ENCODE measurements at regions of chr9 and their contacts with region 1.

Region 1: DNA sequence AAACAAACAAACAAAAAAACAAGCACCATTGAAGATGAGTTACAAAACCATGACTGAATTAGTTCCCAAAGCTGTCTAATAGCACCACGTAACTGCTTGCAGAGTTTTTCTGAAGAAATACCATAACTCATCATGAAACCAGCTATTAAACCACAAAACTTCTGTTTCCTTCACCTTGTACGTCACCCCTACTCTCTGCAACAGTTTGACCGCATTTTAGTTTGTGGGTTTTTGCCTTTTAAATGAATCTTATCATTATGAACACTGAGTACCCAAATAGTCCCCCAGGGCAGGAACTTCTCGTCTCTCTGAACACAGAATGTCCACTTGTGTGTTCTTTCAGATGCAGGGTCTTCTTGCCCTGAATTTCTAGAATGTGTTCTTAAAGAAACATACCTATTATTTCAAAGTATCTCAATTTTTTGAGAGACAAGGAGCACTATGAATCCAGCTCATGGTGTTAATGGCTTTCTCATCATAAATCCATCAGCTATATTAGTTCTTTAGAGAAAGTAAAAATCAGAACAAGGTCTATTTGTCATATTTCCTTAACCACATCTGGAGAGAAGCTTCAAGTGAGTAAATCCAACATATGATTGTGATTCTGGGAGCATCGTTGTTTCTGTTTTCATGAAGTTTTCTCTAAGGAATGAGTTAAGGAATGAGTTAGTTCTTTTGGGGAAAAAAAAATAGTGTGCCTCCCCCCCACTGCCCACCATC is 210.6 kb downstream of the AUH start:
- DNase-seq: peak in 1 of 2 donors; percentile 87
- ATAC-seq: peak; percentile 83 to 93 (median 86)
- H3K4me3 ChIP-seq: no peak overlapping the region
- H3K4me3 Mint-ChIP-seq: peak overlapping the region; percentile 75
- H3K27ac ChIP-seq: peak overlapping the region; percentile 88
- H3K27ac Mint-ChIP-seq: peak overlapping the region; percentile 83 to 93
- H3K4me1 ChIP-seq: peaks cover 72% of the 10 kb centered on the region
- H3K4me1 Mint-ChIP-seq: peaks cover 66 to 69% of the 10 kb centered on the region in 2 donors
- H3K27me3 ChIP-seq: no peaks in the 10 kb centered on the region
- H3K27me3 Mint-ChIP-seq: no peaks in the 10 kb centered on the region
- CTCF ChIP-seq: no peak

Region 2: GRCh38 chr9:91101611-91102168 is 49.5 kb before region 1 on chr9:
- intact Hi-C with region 1: loop called (anchors 1 kb)
- DNase-seq: peak; percentile 41 to 92
- ATAC-seq: peak; percentile 59 to 83 (median 63)
- H3K4me3 ChIP-seq: no peak overlapping the region
- H3K4me3 Mint-ChIP-seq: peak overlapping the region; percentile 57
- H3K27ac ChIP-seq: no peak overlapping the region
- H3K27ac Mint-ChIP-seq: peak overlapping the region; percentile 65 to 85
- H3K4me1 ChIP-seq: peaks cover 38% of the 10 kb centered on the region
- H3K4me1 Mint-ChIP-seq: peaks cover 36 to 37% of the 10 kb centered on the region in 2 donors
- H3K27me3 ChIP-seq: no peaks in the 10 kb centered on the region
- H3K27me3 Mint-ChIP-seq: peaks cover 0 to 5% of the 10 kb centered on the region in 2 donors
- CTCF ChIP-seq: no peak

Region 3: DNA sequence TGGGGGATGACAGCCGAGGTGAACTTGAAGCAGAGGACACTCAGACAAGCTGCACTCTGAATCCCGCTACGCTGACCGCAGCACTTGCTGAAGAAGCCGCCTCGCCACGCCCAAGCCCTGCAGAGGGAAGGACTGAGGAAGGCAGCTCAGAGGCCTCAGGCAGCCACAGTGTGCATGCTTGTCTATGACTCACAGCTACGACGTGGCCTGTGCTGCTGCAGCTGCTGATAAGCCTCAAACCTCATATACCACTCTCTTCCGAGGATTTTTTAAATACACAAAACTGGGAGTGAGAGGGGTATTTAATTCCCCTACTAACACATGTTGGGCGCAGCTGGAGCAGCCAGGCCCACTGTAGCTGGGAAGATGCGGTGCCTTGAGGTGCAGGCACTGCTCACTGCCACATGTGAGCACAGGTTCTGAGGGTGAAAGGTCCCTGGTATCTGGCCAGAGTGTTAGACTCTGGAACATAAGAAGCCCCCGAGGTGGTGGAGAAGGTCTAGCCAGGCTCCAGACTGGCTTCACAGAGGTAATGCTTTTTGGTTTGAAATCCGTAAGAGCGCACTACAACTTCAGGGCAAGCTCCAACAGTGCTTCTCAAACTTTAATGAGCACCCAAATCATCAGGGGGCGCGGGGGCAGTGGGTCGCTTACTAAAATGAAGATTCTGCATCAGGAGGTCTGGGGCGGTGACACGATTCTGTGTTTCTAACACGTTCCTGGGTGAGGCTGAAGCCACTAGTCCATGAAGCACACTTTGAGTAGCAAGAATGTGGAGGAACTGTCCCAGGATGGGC is 13.8 kb after region 1 on chr9:
- intact Hi-C with region 1: loop called (anchors 1 kb)
- DNase-seq: peak; percentile 68 to 75
- ATAC-seq: peak; percentile 77 to 89 (median 78)
- H3K4me3 ChIP-seq: no peak overlapping the region
- H3K4me3 Mint-ChIP-seq: peak overlapping the region; percentile 87
- H3K27ac ChIP-seq: peak overlapping the region; percentile 78
- H3K27ac Mint-ChIP-seq: peak overlapping the region; percentile 93 to 94
- H3K4me1 ChIP-seq: peaks cover 62% of the 10 kb centered on the region
- H3K4me1 Mint-ChIP-seq: peaks cover 44 to 46% of the 10 kb centered on the region in 2 donors
- H3K27me3 ChIP-seq: no peaks in the 10 kb centered on the region
- H3K27me3 Mint-ChIP-seq: no peaks in the 10 kb centered on the region
- CTCF ChIP-seq: no peak

Region 4: DNA sequence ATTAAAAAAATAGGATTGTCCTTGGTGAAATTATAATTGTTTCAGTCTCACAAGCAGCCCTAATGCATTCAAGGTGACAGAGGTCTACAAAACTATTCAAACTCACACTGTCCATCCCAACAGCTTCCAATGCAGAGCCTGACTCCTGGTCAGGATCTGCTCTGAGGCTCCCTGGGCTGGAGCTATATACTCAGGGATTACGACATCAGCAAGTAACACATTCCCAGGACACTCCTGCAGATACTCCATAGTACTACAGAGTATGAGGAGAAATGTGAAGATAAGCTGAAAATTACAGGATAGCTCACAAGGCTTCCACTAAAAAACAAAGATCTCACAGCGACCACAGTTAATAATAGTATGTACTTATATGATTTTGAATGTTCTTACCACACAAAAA is 80.5 kb after region 1 on chr9:
- intact Hi-C with region 1: no loop called
- DNase-seq: no peak
- ATAC-seq: no peak
- H3K4me3 ChIP-seq: no peak overlapping the region
- H3K4me3 Mint-ChIP-seq: no peak overlapping the region
- H3K27ac ChIP-seq: no peak overlapping the region
- H3K27ac Mint-ChIP-seq: no peak overlapping the region
- H3K4me1 ChIP-seq: no peaks in the 10 kb centered on the region
- H3K4me1 Mint-ChIP-seq: peaks cover 0 to 5% of the 10 kb centered on the region in 2 donors
- H3K27me3 ChIP-seq: no peaks in the 10 kb centered on the region
- H3K27me3 Mint-ChIP-seq: no peaks in the 10 kb centered on the region
- CTCF ChIP-seq: no peak

Region 5: GRCh38 chr9:91422758-91423711 is 271.9 kb after region 1 on chr9:
- intact Hi-C with region 1: loop called (anchors 2 kb)
- DNase-seq: peak; percentile 59 to 82
- ATAC-seq: peak; percentile 34 to 57 (median 50)
- H3K4me3 ChIP-seq: peak overlapping the region; percentile 75
- H3K4me3 Mint-ChIP-seq: peak overlapping the region; percentile 97
- H3K27ac ChIP-seq: peak overlapping the region; percentile 58
- H3K27ac Mint-ChIP-seq: peak overlapping the region; percentile 92 to 98
- H3K4me1 ChIP-seq: peaks cover 44% of the 10 kb centered on the region
- H3K4me1 Mint-ChIP-seq: peaks cover 57 to 66% of the 10 kb centered on the region in 2 donors
- H3K27me3 ChIP-seq: peaks cover 10% of the 10 kb centered on the region
- H3K27me3 Mint-ChIP-seq: peaks cover 0 to 5% of the 10 kb centered on the region in 2 donors
- CTCF ChIP-seq: no peak

Measured in natural killer cell (primary cell).